Activated naive CD4-positive, alpha-beta T cell treated with anti-CD3 and anti-CD28 coated beads for 36 hours (primary cell): ENCODE measurements at regions of chr12 and their contacts with region 1.

Region 1: GRCh38 chr12:108618079-108618952 is 15.4 kb downstream of the SELPLG start:
- DNase-seq: peak; percentile 81
- H3K4me3 Mint-ChIP-seq: no peak overlapping the region
- H3K27ac Mint-ChIP-seq: peak overlapping the region; percentile 20
- H3K4me1 Mint-ChIP-seq: peaks cover 36% of the 10 kb centered on the region
- H3K27me3 Mint-ChIP-seq: no peaks in the 10 kb centered on the region

Region 2: GRCh38 chr12:107992870-107993451 is 625.4 kb before region 1 on chr12:
- CTCF ChIA-PET with region 1: interaction called, 4 read pairs
- intact Hi-C with region 1: loop called (anchors 5 kb)
- DNase-seq: no peak
- H3K4me3 Mint-ChIP-seq: no peak overlapping the region
- H3K27ac Mint-ChIP-seq: no peak overlapping the region
- H3K4me1 Mint-ChIP-seq: no peaks in the 10 kb centered on the region
- H3K27me3 Mint-ChIP-seq: peaks cover 20% of the 10 kb centered on the region

Region 3: GRCh38 chr12:108576660-108577234 is 41.6 kb before region 1 on chr12:
- CTCF ChIA-PET with region 1: interaction called, 306 read pairs
- intact Hi-C with region 1: loop called (anchors 1 kb)
- DNase-seq: no peak
- H3K4me3 Mint-ChIP-seq: no peak overlapping the region
- H3K27ac Mint-ChIP-seq: no peak overlapping the region
- H3K4me1 Mint-ChIP-seq: peaks cover 38% of the 10 kb centered on the region
- H3K27me3 Mint-ChIP-seq: no peaks in the 10 kb centered on the region

Region 4: GRCh38 chr12:108643941-108644810 is 25.9 kb after region 1 on chr12:
- CTCF ChIA-PET with region 1: interaction called, 77 read pairs
- intact Hi-C with region 1: loop called (anchors 2 kb)
- DNase-seq: no peak
- H3K4me3 Mint-ChIP-seq: no peak overlapping the region
- H3K27ac Mint-ChIP-seq: no peak overlapping the region
- H3K4me1 Mint-ChIP-seq: peaks cover 35% of the 10 kb centered on the region
- H3K27me3 Mint-ChIP-seq: no peaks in the 10 kb centered on the region

Region 5: DNA sequence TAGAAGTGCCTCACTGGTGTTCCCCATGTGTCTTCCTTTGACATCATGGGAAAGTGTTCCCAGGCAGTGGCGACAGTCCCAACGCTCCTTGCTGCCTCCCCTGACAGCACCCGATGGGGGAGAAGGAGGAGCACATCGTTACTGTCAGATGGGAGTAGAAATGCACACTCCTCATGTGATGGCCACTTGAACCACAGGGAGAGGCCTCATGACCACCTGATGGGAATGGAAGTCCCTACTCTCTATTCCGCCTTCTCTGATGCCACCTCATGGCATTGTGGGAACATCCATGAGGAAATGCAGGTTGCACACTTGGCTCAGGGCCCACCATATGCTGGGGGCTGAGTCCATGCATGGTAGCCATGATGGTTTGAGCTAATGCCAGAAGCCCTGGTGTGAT is 127.3 kb after region 1 on chr12:
- CTCF ChIA-PET with region 1: no interaction called
- intact Hi-C with region 1: no loop called
- DNase-seq: no peak
- H3K4me3 Mint-ChIP-seq: no peak overlapping the region
- H3K27ac Mint-ChIP-seq: no peak overlapping the region
- H3K4me1 Mint-ChIP-seq: no peaks in the 10 kb centered on the region
- H3K27me3 Mint-ChIP-seq: no peaks in the 10 kb centered on the region

Region 6: DNA sequence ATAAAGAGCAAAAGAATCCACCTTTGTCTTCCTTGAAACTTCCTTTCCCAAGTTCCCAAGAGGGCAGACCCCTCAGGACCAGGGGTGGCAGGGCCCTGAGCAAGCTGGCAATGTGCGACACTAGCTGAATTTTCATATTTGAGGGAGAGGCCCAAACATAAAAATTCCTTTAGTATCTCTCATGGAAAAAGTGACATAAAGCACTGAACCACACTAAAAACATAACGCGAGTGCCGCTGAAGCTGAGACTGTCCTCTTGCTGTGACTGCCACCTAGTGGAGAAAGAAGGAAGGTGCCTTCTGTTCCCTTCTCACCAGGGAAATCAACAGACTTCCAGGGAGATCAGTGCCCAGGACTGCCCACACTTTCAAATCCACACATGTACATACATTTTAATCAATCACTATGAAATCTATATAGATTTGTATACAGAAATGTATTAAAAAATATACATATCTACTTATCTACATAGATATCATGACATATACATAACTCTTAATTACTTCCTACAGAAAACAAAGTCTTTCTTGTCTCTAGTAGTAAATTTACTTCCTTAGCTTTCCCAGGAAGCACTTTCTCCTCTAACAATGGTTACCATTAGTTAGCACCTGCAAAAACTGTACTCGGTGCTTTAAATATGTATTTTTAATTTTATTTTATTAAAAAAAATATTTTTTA is 185.3 kb after region 1 on chr12:
- CTCF ChIA-PET with region 1: interaction called, 29 read pairs
- intact Hi-C with region 1: loop called (anchors 5 kb)
- DNase-seq: peak; percentile 83
- H3K4me3 Mint-ChIP-seq: no peak overlapping the region
- H3K27ac Mint-ChIP-seq: peak overlapping the region; percentile 76
- H3K4me1 Mint-ChIP-seq: peaks cover 7% of the 10 kb centered on the region
- H3K27me3 Mint-ChIP-seq: no peaks in the 10 kb centered on the region